Sciatic nerve (tissue), 2 donors: ENCODE measurements at regions of chr11 and their contacts with region 1.

Region 1: GRCh38 chr11:103202048-103202651 is 92.9 kb downstream of the DYNC2H1 start:
- DNase-seq: no peak
- ATAC-seq: no peak

Region 2: GRCh38 chr11:102204174-102204573 is 998.0 kb before region 1 on chr11:
- intact Hi-C with region 1: no loop called
- DNase-seq: no peak
- ATAC-seq: no peak

Region 3: DNA sequence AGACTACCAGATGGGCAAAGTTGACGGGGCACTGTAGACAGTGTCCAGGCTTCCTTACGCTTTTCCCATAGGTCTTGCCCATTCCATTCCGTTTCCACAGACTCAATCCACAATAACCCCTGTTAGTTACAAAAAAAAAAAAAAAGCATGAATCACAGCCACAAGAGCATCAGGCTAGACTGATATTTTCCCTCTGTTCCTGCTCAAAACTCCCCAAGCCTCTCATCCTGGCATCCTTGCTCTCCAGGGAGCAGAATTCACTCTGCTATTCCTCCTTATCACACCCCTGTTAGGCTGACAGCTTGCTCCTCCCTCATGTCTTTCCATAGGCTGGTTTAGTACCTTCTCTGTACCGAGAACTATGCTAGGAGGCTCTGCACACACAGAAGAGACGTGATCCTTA is 791.8 kb before region 1 on chr11:
- intact Hi-C with region 1: no loop called
- DNase-seq: no peak
- ATAC-seq: no peak

Region 4: DNA sequence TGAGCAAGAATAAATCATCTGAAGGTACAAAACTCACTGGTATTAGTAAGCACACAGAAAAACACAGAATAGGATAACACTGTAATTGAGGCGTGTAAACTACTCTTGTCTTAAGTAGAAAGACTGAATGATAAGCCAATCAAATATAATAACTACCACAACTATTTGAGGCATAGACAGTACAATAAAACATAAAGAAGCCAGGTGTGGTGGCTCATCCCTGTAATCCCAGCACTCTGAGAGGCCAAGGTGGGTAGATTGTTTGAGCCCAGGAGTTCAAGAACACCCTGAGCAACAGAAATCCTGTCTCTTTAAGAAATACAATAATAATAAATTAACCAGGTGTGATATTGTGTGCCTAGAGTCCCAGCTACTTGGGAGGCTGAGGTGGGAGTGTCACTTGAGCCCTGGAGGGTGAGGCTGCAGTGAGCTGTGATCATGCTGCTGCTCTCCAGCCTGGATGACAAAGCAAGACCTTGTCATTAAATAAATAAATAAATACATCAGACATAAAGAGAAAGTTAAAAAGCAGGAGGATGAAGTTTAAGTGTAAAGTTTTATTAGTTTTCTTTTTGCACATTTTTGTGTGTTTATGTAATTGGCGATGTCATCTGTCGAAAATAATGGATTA is 297.7 kb after region 1 on chr11:
- intact Hi-C with region 1: loop called (anchors 5 kb)
- DNase-seq: no peak
- ATAC-seq: no peak